Posterior cingulate gyrus (tissue), 11 donors: ENCODE measurements at regions of chr3 and their contacts with region 1.

Region 1: DNA sequence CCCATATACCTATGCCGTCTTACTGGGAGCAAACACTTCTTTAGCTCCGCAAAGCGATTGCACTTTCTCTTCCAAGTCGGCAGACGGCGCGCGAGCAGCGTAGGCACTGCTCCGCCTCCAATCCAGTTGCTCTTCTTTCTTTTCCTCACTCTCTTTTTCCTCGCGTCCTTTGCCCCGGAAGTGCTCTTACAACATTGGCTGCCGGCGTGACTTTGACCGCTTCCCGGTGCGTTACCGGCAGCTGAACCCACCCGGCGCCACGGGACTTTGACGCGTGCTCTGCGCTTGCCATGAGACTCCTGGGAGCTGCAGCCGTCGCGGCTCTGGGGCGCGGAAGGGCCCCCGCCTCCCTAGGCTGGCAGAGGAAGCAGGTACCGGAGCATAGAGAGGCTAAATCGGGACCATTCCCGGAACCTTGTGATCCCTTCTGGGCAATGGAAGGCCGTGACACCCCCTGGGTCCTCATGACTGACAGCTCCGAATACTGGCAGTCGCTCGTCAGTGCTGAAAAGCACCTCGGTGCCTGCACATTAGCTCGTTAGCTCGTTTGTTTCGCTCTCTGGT is at the start of gene GFM1:
- DNase-seq: peak; percentile 85 to 99 (median 93)

Region 2: DNA sequence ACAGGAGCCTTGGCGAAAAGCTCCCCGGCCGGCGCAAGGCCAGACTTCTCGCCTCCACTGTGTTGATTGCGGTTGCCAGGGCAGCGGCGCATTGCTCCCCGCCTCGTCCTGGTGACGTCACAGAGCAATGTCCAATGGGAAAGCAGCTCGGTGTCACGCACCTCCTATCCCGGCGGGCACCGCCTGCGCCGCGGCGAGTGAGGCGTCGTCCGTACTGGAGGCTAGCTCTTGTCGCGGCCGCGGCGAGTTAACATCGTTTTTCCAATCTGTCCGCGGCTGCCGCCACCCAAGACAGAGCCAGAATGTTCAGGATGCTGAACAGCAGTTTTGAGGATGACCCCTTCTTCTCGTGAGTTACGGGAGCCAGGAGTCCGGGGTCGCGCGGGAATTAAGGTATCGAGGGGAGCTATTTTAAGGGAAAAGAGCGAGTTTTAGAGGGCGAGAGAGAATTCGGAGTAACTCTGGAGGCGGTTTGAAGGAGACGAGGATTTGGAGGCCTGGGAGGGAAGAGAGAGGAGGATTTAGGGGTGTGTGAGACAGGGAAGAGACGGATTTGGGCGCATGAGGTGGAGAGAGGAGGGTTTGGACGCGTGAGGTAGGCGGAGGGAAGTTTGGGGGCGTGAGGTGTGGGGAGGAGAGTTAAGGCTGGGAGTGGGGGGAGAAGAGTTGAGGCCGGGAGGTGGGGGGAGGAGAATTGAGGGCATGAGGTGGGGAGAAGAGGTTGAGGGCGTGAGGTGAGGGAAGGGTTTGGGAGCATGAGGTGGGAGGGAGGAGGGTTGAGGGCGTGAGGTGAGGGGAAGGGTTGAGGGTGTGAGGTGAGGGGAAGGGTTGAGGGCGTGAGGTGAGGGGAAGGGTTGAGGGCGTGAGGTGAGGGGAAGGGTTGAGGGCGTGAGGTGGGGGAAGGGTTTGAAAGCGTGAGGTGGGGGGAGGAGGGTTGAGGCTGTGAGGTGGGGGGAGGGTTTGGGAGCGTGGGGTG is 73.1 kb before region 1 on chr3 and contains the start of gene MLF1:
- intact Hi-C with region 1: loop called (anchors 10 kb)
- DNase-seq: peak; percentile 93 to 100 (median 98)